Transverse colon (tissue), 4 donors: ENCODE measurements at regions of chr3 and their contacts with region 1.

Region 1: DNA sequence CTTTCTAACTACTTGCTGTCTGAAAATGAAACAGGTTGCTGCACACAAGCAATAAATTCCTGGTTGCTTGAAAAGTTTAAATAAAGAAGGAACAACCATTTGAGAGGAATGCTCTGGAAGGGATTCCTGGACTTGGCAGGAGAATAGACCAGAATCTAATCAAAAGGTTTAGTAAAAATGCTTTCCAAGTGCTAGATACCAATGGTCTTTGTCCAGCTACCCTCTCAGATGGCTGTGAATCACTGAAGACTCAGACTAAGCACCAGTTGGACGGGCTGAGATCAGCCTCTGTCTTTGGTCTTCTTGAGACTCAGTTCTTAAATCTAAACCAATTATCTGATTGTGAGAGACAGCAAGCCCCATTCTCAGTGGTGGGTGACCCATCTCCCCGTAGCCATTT is 27.7 kb upstream of the LPP start:
- DNase-seq: no peak
- H3K4me3 ChIP-seq: no peak overlapping the region
- H3K27ac ChIP-seq: peak overlapping the region in 3 of 4 donors; percentile 18 to 63 (median 50)
- H3K4me1 ChIP-seq: peaks cover 0 to 43% (median 10%) of the 10 kb centered on the region in 4 donors
- H3K27me3 ChIP-seq: no peaks in the 10 kb centered on the region
- CTCF ChIP-seq: no peak
- EP300 ChIP-seq: no peak
- POLR2A ChIP-seq: no peak

Region 2: GRCh38 chr3:187811585-187812250 is 314.6 kb before region 1 on chr3:
- in situ Hi-C with region 1: no loop called
- intact Hi-C with region 1: no loop called
- DNase-seq: no peak
- H3K4me3 ChIP-seq: no peak overlapping the region
- H3K27ac ChIP-seq: no peak overlapping the region
- H3K4me1 ChIP-seq: peaks cover 0 to 28% (median 10%) of the 10 kb centered on the region in 4 donors
- H3K27me3 ChIP-seq: no peaks in the 10 kb centered on the region
- CTCF ChIP-seq: no peak
- EP300 ChIP-seq: no peak
- POLR2A ChIP-seq: no peak

Region 3: DNA sequence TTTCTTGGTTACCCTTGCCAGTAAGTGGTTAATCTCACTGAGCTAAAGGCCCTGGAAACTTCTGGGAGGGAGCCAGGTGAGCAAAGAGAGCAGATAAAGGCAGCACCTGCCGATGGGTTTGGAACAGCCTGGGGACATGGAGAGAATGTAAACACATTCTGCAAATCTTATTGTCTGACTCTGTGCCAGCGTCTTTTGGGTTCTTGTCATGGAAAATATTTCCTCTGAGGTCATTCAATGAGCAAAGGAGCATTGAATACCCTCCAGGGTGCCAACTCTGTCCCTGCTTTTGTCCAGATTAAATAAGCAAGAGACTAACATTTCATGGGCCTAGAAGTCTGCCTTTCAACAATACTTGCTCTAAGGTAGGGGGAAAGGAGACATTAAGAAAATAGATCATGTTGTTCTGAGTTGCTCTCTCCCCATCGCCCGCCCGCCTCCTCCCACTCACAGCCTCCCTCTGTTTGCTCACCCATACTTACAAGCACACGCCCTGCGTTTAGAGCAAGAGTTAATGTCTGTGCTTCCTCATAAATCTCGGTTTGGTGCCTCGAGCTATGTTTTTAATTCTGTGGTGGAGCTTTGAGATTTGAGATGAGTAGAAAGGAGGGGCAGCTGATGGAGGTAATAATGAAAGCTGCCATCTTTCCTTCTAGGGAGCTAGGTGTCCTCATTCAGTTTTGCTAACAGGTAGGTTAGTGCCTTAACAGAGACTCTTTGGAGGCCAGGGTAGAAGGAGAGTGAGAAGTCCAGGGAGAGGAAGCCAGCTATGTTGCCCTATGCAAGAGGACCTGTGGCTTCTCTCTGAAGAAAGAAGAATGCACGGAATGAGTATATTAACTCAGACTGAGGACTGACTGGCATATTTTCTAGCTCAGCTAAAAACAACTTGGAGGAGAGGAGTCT is 1178.4 kb after region 1 on chr3:
- in situ Hi-C with region 1: no loop called
- intact Hi-C with region 1: loop called (anchors 5 kb)
- DNase-seq: peak; percentile 74
- H3K4me3 ChIP-seq: no peak overlapping the region
- H3K27ac ChIP-seq: peak overlapping the region; percentile 74 to 82 (median 78)
- H3K4me1 ChIP-seq: peaks cover 11 to 35% (median 18%) of the 10 kb centered on the region in 4 donors
- H3K27me3 ChIP-seq: no peaks in the 10 kb centered on the region
- CTCF ChIP-seq: no peak
- EP300 ChIP-seq: no peak
- POLR2A ChIP-seq: no peak